ENCODE measurements at regions of chr22 and their contacts with region 1.

Region 1: GRCh38 chr22:31753634-31754501 is at the start of gene DEPDC5:
- H3K4me3 ChIP-seq: peak within 1 kb of the TSS; percentile 92
- H3K27ac ChIP-seq: peak within 1 kb of the TSS; percentile 94
- H3K4me1 ChIP-seq: peaks cover 20% of the 10 kb centered on the region; the same call in 1 of the 2 replicates
- CTCF ChIP-seq: no peak

Region 2: GRCh38 chr22:31676700-31677099 is 77.2 kb before region 1 on chr22:
- CTCF ChIA-PET with region 1: interaction called, 3 read pairs
- POLR2A ChIA-PET with region 1: interaction called, 10 read pairs
- H3K4me3 ChIP-seq: peak overlapping the region; percentile 26
- H3K27ac ChIP-seq: no peak overlapping the region
- H3K4me1 ChIP-seq: no peaks in the 10 kb centered on the region; the same call in 1 of the 2 replicates
- CTCF ChIP-seq: no peak

Region 3: DNA sequence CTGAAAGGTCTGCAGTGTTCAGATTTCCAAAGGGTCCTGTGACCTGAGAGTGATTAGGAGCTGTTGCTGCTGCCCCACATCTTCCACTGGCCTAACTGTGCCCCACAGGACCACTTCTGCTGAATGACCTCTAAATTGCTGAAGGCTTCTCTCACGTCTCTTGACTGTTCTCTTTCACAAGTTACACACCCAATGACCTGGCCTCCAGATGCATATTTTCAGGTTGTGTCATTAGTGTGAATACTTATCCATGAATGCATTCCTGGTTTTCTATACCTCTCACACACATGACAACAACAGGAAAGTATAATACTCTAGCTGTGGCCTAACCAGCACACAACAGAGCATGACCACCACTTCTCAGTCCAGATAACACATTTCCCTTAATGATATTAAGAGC is 19.4 kb before region 1 on chr22:
- CTCF ChIA-PET with region 1: no interaction called
- POLR2A ChIA-PET with region 1: no interaction called
- H3K4me3 ChIP-seq: no peak overlapping the region
- H3K27ac ChIP-seq: no peak overlapping the region
- H3K4me1 ChIP-seq: no peaks in the 10 kb centered on the region
- CTCF ChIP-seq: no peak

Measured in HEK293 (cell line).